ENCODE measurements at regions of chr2 and their contacts with region 1.

Region 1: GRCh38 chr2:11598228-11598731 is 64.4 kb downstream of the GREB1 start:
- DNase-seq: peak; percentile 82 to 89
- ATAC-seq: peak; percentile 95 to 96
- H3K4me3 ChIP-seq: no peak overlapping the region
- H3K27ac ChIP-seq: peak overlapping the region; percentile 86 to 94 (median 90)
- H3K4me1 ChIP-seq: peaks cover 15 to 18% of the 10 kb centered on the region in 2 donors
- H3K27me3 ChIP-seq: no peaks in the 10 kb centered on the region
- CTCF ChIP-seq: no peak
- POLR2A ChIP-seq: peak in 1 of 2 donors; percentile 31

Region 2: DNA sequence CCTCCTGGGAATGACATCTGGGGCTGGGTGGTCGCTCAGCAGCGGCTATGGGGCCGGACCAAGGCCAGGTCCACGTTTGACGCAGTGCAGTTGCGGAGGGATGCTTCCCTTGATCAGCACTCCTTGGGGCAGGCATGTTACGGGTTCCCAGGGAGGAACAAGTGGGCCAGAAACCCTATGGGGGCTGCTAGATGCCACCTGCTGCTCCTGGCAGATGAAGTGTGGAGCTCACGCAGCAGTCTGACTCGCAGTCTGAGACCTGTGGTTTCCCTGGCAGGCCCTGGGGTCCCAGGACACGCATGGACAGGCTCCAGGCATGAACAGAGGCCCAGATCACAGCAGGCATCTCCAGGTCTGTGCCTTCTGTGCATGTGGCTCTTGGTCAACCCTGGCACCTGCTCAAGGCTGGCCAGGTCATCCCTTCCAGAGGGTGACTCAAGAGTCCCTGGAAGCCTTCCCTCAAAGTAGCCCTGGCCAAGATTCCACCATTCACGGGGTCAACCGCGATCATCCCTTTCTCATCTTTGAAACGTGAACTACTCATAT is 666.5 kb before region 1 on chr2:
- in situ Hi-C with region 1: no loop called
- intact Hi-C with region 1: loop called (anchors 2 kb)
- DNase-seq: peak; percentile 90 to 95
- ATAC-seq: peak; percentile 98 to 99
- H3K4me3 ChIP-seq: no peak overlapping the region
- H3K27ac ChIP-seq: peak overlapping the region; percentile 57 to 82 (median 76)
- H3K4me1 ChIP-seq: peaks cover 8 to 16% of the 10 kb centered on the region in 2 donors
- H3K27me3 ChIP-seq: no peaks in the 10 kb centered on the region
- CTCF ChIP-seq: peak in 1 of 5 experiments; percentile 12
- POLR2A ChIP-seq: no peak

Region 3: DNA sequence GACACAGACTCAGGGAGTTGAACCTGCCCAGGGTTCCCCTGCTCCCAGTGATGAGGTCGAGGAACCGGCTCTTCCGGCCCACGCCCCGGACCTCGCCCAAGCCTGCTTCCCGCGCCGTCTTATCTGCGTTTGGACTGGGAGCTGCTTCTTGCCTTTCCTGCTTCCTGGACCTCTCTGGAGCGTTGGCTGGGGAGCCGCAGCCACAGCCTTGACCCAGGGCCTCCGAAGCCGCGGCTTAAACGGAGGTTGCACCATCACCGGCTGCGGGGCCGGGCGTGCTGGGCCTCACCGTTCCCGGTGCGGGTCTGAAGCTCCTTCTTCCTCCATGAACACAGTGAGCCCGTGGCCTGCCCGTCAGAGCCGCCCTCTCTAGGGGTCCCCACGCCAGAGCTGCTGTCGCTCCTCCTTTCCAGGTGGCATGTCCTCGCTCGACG is 58.4 kb after region 1 on chr2:
- in situ Hi-C with region 1: no loop called
- intact Hi-C with region 1: loop called (anchors 1 kb)
- DNase-seq: no peak
- ATAC-seq: no peak
- H3K4me3 ChIP-seq: no peak overlapping the region
- H3K27ac ChIP-seq: no peak overlapping the region
- H3K4me1 ChIP-seq: peaks cover 4 to 13% of the 10 kb centered on the region in 2 donors
- H3K27me3 ChIP-seq: no peaks in the 10 kb centered on the region
- CTCF ChIP-seq: no peak
- POLR2A ChIP-seq: no peak

Region 4: DNA sequence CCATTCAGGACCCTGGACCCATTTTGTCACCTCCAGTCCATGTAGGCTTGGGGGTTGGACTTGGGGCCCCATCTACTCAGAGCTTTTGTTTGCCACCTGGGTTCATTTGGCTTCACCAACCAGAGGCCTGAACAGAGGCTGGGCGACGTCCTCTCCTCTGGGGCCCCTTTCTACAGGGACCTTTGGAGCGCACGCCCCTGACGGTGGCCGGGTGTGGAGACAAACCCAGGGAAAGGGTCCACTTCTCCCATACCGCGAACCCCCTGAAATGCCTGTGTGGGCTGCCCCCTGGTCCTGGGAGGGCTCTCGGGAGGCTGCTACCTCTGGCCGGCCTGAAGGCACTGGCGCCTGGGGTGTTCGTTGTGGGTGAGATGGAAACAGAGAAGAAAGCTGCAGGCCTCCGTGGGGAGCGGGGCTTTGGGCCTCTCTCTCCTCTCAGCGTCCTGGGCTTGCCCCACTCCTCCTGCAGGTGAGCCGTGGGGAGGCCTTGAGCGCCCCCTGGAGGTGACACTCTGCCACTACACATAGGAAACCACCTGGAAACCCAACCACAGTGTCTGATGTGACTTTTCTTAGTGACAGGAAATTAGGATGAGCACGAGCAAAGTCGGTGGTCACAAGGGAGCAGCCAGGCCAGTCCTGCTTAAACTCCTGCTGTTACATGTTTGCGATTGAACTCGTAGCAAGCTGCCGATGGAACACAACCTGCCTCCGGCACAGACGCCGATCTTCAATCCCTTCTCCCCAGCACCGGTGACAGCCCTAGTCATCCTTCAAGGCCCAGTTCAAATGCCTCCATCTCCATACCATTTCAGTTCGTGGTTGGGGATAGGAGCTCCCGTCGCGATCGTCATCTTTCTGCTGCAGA is 83.7 kb after region 1 on chr2:
- in situ Hi-C with region 1: loop called in 1 of 4 experiments (anchors 10 kb)
- intact Hi-C with region 1: loop called (anchors 1 kb)
- DNase-seq: peak; percentile 59 to 82
- ATAC-seq: peak; percentile 9 to 30
- H3K4me3 ChIP-seq: peak overlapping the region in 2 of 4 donors; percentile 22 to 63
- H3K27ac ChIP-seq: peak overlapping the region; percentile 92 to 100 (median 93)
- H3K4me1 ChIP-seq: peaks cover 54 to 80% of the 10 kb centered on the region in 2 donors
- H3K27me3 ChIP-seq: no peaks in the 10 kb centered on the region
- CTCF ChIP-seq: peak; percentile 91 to 99 (median 98)
- POLR2A ChIP-seq: peak in 1 of 2 donors; percentile 22

Region 5: DNA sequence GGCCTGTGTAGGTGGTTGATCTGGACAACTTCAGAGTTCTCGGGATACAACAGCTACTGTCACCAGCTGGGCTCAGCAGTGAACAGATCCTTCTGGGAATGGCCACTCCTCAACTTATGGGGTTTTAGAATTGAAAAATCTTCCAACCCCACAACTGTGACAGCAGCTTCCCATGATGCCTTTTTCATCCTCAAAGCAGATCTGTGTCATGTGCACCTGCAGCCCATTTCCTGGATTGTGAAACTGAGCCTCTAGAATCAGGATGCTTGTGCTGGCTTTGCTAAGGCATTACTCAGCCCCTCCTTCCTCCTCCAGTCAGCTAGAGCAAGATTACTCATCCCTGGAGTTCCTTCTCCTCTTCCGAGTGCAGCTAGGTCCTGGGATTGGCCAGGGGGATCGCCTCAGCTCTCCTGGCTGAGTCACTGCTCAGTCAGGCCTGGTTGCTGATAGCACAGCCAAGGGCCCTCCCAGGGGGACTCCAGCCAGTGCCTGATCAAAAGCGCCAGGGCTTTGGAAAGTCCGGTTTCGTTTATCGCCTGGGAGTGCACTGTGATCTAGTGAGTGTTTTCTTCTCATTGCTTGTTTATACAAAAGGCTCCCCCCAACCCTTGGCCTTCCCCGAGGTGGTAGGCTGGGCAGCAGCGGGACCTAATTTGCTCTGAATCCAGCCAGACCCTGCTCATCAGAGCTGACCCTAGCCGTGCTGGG is 145.7 kb after region 1 on chr2:
- in situ Hi-C with region 1: no loop called
- intact Hi-C with region 1: loop called (anchors 5 kb)
- DNase-seq: peak; percentile 97 to 98
- ATAC-seq: peak; percentile 80 to 82
- H3K4me3 ChIP-seq: peak overlapping the region; percentile 41 to 48 (median 46)
- H3K27ac ChIP-seq: peak overlapping the region; percentile 92 to 95 (median 94)
- H3K4me1 ChIP-seq: peaks cover 33 to 55% of the 10 kb centered on the region in 2 donors
- H3K27me3 ChIP-seq: no peaks in the 10 kb centered on the region
- CTCF ChIP-seq: no peak
- POLR2A ChIP-seq: peak; percentile 55 to 62